Calu3 (cell line): ENCODE measurements at regions of chr3 and their contacts with region 1.

Region 1: GRCh38 chr3:57796261-57796660 is 40.2 kb downstream of the SLMAP start:
- DNase-seq: no peak
- H3K4me3 Mint-ChIP-seq: peak overlapping the region; percentile 4
- H3K27ac Mint-ChIP-seq: peak overlapping the region; percentile 43
- H3K4me1 Mint-ChIP-seq: peaks cover 50% of the 10 kb centered on the region
- H3K27me3 Mint-ChIP-seq: no peaks in the 10 kb centered on the region
- CTCF ChIP-seq: no peak

Region 2: DNA sequence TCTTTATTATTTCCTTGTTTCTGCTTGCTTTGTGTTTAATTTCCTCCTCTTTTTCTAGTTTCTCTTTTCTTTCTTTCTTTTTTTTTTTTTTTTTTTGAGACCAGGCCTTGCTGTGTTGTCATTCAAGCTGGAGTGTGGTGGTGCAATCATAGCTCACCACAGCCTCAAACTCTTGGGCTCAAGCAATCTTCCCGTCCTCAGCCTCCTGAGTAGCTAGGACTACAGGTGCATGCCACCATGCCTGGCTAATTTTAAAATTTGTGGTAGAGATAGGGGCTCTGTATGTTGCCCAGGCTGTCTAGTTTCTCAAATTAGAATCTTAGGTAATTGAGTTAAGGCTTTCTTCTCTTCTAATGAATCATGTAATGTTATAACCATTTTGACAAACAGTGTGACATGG is 17.8 kb before region 1 on chr3:
- CTCF ChIA-PET with region 1: no interaction called
- intact Hi-C with region 1: loop called (anchors 2 kb)
- DNase-seq: no peak
- H3K4me3 Mint-ChIP-seq: no peak overlapping the region
- H3K27ac Mint-ChIP-seq: peak overlapping the region; percentile 19
- H3K4me1 Mint-ChIP-seq: peaks cover 32% of the 10 kb centered on the region
- H3K27me3 Mint-ChIP-seq: no peaks in the 10 kb centered on the region
- CTCF ChIP-seq: no peak

Region 3: GRCh38 chr3:58135712-58136543 is 339.7 kb after region 1 on chr3:
- CTCF ChIA-PET with region 1: interaction called, 12 read pairs
- intact Hi-C with region 1: no loop called
- DNase-seq: no peak
- H3K4me3 Mint-ChIP-seq: no peak overlapping the region
- H3K27ac Mint-ChIP-seq: no peak overlapping the region
- H3K4me1 Mint-ChIP-seq: no peaks in the 10 kb centered on the region
- H3K27me3 Mint-ChIP-seq: no peaks in the 10 kb centered on the region
- CTCF ChIP-seq: no peak

Region 4: DNA sequence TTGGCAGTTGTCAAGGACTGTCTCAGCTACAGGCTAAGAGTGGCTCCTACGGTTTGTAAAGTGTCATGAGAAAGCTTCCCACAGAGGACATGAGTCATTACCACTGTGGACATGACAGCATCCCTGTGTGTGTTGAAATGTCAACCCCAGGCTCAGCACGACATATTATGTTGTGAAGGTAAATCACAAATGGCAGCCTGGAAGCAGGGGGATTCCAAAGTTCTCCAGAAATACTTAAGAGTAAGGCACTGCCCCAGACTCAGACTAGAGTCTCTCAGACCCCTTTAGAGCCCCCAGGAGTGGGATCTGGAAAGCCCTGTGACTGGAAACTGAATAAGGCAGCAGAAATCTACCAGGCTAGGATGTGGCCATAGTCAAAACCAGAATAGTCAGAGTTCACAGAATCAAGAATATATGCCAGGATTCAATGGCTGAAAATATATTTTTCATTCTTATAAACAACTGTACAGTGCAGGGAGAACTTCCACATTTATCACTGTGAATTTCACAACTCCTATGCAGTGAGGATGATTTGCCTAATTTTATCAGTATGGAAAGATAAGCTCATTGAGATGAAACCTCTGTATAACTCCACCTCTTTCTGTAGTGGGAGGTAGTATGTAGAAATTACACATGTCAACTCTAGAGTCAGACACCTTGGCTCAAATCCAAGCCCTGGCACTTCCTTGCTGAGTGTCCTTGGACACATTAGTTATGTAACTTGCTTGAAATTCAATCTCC is 1490.7 kb after region 1 on chr3:
- CTCF ChIA-PET with region 1: no interaction called
- intact Hi-C with region 1: no loop called
- DNase-seq: peak; percentile 4
- H3K4me3 Mint-ChIP-seq: no peak overlapping the region
- H3K27ac Mint-ChIP-seq: no peak overlapping the region
- H3K4me1 Mint-ChIP-seq: no peaks in the 10 kb centered on the region
- H3K27me3 Mint-ChIP-seq: peaks cover 19% of the 10 kb centered on the region
- CTCF ChIP-seq: no peak